Mammary epithelial cell (primary cell): ENCODE measurements at regions of chr3 and their contacts with region 1.

Region 1: GRCh38 chr3:5376761-5377160 is 189.3 kb downstream of the EDEM1 start:
- DNase-seq: no peak
- H3K4me3 ChIP-seq: no peak overlapping the region
- H3K27ac ChIP-seq: no peak overlapping the region
- H3K4me1 ChIP-seq: no peaks in the 10 kb centered on the region
- H3K27me3 ChIP-seq: no peaks in the 10 kb centered on the region
- CTCF ChIP-seq: no peak

Region 2: DNA sequence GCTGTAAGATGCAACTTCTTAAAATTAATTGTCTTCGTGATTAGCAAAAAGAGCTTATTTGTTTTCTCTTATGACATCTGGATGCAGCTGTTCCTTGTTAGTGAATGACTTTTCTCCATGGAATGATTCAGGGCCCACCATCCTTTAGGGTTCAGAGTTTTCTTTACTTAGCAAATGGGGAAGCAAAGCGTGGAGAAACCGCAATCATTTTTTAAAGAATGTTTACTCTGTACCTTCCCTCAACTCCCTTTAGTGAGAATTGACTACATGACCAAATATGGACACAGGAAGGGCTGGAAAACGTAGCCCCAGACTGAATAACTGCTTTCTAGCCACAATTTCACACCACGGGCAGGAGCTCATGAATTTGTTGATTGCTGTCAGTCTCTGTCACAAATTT is 59.2 kb before region 1 on chr3:
- CTCF ChIA-PET with region 1: no interaction called
- dilution Hi-C with region 1: no loop called
- in situ Hi-C with region 1: no loop called
- intact Hi-C with region 1: no loop called
- DNase-seq: no peak
- H3K4me3 ChIP-seq: no peak overlapping the region
- H3K27ac ChIP-seq: no peak overlapping the region
- H3K4me1 ChIP-seq: no peaks in the 10 kb centered on the region
- H3K27me3 ChIP-seq: no peaks in the 10 kb centered on the region
- CTCF ChIP-seq: no peak

Region 3: GRCh38 chr3:5339967-5340535 is 36.7 kb before region 1 on chr3:
- CTCF ChIA-PET with region 1: no interaction called
- dilution Hi-C with region 1: loop called (anchors 5 kb)
- in situ Hi-C with region 1: no loop called
- intact Hi-C with region 1: no loop called
- DNase-seq: no peak
- H3K4me3 ChIP-seq: no peak overlapping the region
- H3K27ac ChIP-seq: no peak overlapping the region
- H3K4me1 ChIP-seq: no peaks in the 10 kb centered on the region
- H3K27me3 ChIP-seq: no peaks in the 10 kb centered on the region
- CTCF ChIP-seq: no peak